ENCODE measurements at regions of chr11 and their contacts with region 1.

Region 1: DNA sequence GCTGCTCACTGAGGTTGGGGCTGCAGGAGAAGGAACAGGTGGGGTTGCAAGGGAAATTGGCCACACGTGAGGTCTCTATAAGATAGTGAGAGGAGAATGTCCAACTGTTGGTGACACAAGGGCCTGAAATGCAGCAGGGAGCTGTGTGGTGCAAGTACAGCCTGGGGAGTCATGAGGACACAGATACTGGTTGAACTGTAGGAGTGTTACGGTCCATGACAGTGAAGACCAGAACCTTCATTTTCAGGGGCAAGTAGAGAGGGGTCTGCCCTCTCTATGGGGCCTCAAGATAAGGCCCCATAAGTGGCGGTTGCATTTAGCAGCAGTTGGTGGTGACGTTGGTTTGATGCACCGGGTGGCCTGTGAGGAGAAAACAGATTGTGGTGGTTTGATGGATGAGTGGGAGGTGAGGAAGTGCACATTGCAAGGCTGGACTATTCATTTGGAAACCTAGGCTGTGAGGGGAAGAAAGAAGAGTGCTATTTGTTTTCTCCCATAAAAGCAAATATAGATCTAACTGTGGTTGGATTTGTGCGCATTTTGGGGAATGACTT is 39.4 kb downstream of the MICAL2 start:
- DNase-seq: peak; percentile 50
- H3K4me3 Mint-ChIP-seq: no peak overlapping the region
- H3K27ac Mint-ChIP-seq: peak overlapping the region; percentile 88
- H3K4me1 Mint-ChIP-seq: peaks cover 65% of the 10 kb centered on the region
- H3K27me3 Mint-ChIP-seq: no peaks in the 10 kb centered on the region

Region 2: DNA sequence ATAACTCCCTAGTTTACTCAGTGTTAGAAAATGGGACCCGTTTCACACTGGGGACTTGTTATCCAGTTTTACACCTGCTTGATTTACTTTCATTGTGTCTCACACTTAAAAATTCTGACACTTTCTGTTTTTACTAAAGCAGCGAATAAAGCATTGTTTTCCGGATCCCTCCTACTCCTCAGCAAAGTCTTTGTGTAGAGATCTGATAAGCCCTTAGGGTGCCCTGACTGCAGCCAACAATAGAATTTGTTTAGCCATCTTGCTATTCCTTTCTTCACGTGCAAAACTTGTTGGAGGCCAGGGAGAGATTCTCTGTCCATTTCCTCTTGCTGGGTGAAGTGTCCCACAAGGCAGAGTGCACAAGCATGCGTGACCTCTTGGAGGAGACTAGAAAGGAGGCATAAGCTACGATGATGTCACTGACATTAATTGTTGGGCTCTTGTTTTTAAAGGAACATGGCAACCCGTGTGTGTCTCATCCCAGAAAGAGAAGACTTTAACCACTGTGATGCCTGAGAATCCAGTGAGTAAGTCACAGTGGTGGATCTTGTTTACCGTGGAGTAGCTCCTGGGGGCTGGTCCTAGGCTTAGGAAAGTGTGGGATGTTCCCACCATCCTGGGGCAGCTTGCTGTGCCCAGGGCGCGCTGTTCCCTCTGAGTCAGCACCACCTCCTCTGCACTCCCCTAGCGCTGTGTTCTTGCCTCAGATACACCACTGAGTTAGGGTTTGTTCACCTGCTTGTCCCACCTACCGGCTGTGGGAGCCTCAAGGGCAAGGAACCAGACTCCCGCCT is 11.6 kb before region 1 on chr11:
- CTCF ChIA-PET with region 1: interaction called, 4 read pairs
- POLR2A ChIA-PET with region 1: interaction called, 11 read pairs
- DNase-seq: no peak
- H3K4me3 Mint-ChIP-seq: no peak overlapping the region
- H3K27ac Mint-ChIP-seq: peak overlapping the region; percentile 65
- H3K4me1 Mint-ChIP-seq: peaks cover 58% of the 10 kb centered on the region
- H3K27me3 Mint-ChIP-seq: no peaks in the 10 kb centered on the region

Measured in activated CD4-positive, alpha-beta memory T cell treated with anti-CD3 and anti-CD28 coated beads, Interleukin-2, amount 10 ng/mL, durations not matched to agents 7 days and 5 days (primary cell).